ENCODE measurements at regions of chr11 and their contacts with region 1.

Region 1: DNA sequence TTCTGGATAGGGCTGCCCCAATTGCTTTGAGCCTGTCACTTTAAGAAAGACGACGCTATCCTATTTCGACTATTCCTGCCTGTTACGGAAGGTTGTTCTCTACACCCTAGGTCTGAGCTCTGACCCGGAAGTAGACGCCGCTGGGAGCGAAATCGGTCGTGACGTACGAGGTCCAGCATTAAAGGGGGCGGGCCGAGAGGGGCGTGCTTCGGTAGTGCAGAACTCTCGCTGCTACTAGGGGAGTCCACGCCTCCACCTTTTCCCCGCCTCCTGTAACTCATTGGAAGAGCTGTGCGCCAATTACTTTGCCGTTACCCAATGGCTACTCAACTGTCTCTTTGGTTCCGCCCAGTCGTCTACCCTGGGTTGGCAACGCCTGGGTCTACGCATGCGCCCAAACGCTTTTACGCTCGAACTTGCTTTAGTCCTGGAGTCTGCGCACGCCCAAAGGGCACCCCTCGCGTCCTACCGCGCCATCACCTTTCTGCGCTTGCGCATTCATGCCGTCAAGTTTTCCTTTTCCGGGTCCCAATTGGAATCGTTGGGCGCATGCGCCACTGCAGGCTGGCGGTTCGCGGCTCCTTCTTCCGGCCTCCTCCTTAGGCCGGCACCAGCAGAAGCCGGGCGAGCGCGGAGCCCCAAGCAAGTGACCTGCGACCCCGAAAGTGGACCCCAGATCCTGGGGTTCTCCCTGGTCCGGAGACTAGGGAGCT is at the start of gene PCNX3:
- DNase-seq: peak; percentile 100
- ATAC-seq: peak; percentile 92
- H3K4me3 ChIP-seq: peak within 1 kb of the TSS; percentile 81 to 82
- H3K27ac ChIP-seq: peak within 1 kb of the TSS in 1 of 2 donors; percentile 85
- H3K4me1 ChIP-seq: peaks cover 0 to 2% of the 10 kb centered on the region in 2 donors
- H3K27me3 ChIP-seq: no peaks in the 10 kb centered on the region
- total RNA-seq, gene PCNX3: 24.8 to 28.8 TPM

Region 2: DNA sequence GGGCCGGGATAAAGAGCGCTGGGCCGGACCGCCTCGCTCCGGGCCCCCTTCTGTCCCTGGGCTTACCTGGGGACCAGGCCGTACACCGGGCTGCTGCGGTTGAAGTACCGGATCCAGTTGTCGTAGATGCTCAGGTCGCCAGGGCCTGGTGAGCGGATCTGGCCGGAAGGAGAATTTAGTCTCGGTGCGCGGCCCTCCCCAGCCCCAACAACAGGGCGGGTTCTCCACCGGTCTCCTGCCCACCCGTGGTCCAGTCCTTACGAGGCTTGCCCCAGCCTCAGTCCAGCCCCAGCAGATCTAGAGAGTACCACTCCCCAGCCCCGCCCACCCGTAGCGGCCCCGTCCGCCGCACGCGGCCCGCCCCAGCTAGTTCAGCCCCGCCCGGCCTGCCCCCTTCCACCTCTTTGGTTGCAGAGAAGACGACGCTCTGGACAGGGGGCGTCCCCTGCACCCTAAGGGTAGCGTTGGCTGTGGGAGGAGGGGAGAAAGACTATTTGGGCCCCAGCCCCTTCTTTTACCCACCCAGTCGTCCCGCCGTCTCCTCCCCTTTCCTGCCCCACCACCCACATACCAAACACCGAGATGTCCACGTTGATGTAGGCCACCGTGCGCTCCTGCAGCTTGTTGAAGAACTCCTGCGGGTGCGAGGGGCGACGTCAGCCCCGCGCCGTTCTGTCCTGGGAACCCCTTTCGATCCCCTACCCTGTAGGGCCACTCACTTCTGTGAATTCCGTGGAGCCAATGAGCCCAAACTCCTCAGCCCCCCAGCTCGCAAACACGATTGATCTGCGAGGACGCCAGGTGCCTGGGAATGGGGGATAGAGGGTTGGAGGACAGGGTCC is 567.6 kb before region 1 on chr11:
- intact Hi-C with region 1: no loop called
- DNase-seq: peak; percentile 61 to 87
- ATAC-seq: peak; percentile 64
- H3K4me3 ChIP-seq: peak overlapping the region; percentile 2 to 15
- H3K27ac ChIP-seq: no peak overlapping the region
- H3K4me1 ChIP-seq: no peaks in the 10 kb centered on the region
- H3K27me3 ChIP-seq: no peaks in the 10 kb centered on the region

Region 3: DNA sequence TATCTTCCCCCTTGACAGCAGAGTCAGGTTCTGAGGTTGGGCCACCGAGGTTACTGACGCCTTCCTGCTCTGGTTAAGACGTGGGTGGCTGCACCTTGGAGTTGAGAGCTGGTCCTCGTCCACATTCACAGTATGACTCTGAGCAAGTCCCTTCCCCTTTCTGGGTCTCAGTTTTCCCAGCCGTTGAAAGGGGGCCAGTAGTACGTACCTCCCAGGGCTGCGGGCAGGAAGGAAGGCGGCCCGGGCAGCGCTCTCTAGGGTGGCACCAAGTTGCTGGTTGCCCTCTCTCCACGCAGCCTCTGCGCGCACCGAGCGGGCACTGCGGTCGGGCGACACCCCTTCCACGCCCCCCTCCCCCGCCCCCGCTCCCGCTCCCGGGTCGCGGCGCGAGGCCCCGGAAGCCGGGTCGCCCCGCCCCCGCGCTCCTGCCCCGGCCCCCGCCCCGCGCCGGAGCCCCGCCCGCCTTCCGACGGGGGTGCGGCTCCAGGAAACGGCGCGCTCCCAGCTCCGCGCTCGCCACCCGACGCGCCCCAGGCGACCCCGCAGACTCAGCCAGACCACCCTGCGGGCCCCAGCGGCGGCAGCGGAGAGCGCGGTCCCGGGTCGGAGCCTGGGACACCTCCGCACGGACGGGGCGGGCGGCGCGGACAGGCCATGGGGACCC is 39.7 kb before region 1 on chr11 and contains the start of gene EHBP1L1:
- intact Hi-C with region 1: loop called in 1 of 2 experiments (anchors 2 kb)
- DNase-seq: peak; percentile 86 to 93
- ATAC-seq: peak; percentile 17
- H3K4me3 ChIP-seq: peak within 1 kb of the TSS; percentile 82 to 84
- H3K27ac ChIP-seq: peak within 1 kb of the TSS; percentile 25 to 78
- H3K4me1 ChIP-seq: no peaks in the 10 kb centered on the region
- H3K27me3 ChIP-seq: no peaks in the 10 kb centered on the region
- total RNA-seq, gene EHBP1L1: 235 to 266 TPM

Region 4: GRCh38 chr11:65652511-65653231 is 37.3 kb after region 1 on chr11:
- intact Hi-C with region 1: loop called in 1 of 2 experiments (anchors 5 kb)
- DNase-seq: peak; percentile 97 to 99
- ATAC-seq: peak; percentile 96
- H3K4me3 ChIP-seq: peak overlapping the region; percentile 22 to 34
- H3K27ac ChIP-seq: peak overlapping the region; percentile 89 to 95
- H3K4me1 ChIP-seq: peaks cover 0 to 4% of the 10 kb centered on the region in 2 donors
- H3K27me3 ChIP-seq: no peaks in the 10 kb centered on the region

Region 5: GRCh38 chr11:65662799-65663638 is 47.6 kb after region 1 on chr11 and contains the start of gene RELA:
- intact Hi-C with region 1: no loop called
- DNase-seq: peak; percentile 97 to 98
- ATAC-seq: peak; percentile 95
- H3K4me3 ChIP-seq: peak within 1 kb of the TSS; percentile 82 to 93
- H3K27ac ChIP-seq: peak within 1 kb of the TSS; percentile 83 to 92
- H3K4me1 ChIP-seq: no peaks in the 10 kb centered on the region
- H3K27me3 ChIP-seq: no peaks in the 10 kb centered on the region
- total RNA-seq, gene RELA: 98.2 to 108 TPM

Region 6: DNA sequence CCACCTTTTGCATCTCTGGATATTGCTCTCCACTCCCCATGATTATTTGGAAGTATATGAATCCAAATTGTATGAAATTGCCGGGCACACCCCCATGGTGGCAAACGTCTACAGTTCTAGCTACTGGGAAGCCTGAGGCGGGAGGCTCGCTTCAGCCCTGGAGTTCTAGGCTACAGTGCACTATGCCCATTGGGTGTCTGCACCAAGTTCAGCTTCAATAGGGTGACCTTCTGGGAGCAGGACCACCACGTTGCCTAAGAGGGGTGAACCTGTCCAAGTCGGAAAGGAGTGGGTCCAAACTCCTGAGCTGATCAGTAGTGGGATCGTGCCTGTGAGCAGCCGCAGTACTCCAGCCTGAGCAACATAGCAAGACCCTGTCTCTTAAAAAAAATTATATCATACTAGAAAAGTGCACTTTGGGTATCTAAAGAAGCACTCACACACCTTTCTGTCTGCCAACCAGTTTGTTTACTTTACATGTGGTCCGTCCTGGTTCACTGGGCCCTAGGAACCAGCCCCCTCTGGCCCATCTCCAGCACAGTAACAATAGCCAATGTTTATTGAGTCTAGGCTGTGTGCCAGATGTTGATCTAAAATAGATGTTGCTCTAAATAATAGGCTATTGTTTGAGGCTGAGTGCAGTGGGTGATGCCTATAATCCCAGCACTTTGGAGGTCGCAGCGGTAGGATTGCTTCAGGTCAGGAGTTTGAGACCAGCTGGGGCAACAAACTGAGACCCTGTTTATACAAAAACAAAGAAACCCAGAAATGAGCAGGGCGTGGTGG is 80.3 kb after region 1 on chr11:
- intact Hi-C with region 1: no loop called
- DNase-seq: no peak
- ATAC-seq: no peak
- H3K4me3 ChIP-seq: no peak overlapping the region
- H3K27ac ChIP-seq: no peak overlapping the region
- H3K4me1 ChIP-seq: no peaks in the 10 kb centered on the region
- H3K27me3 ChIP-seq: no peaks in the 10 kb centered on the region

Region 7: GRCh38 chr11:65988791-65989592 is 373.6 kb after region 1 on chr11:
- intact Hi-C with region 1: no loop called
- DNase-seq: peak; percentile 87 to 92
- ATAC-seq: peak; percentile 96
- H3K4me3 ChIP-seq: no peak overlapping the region
- H3K27ac ChIP-seq: no peak overlapping the region
- H3K4me1 ChIP-seq: no peaks in the 10 kb centered on the region
- H3K27me3 ChIP-seq: no peaks in the 10 kb centered on the region

Measured in aorta (tissue), 5 donors.